ENCODE measurements at regions of chr1 and their contacts with region 1.

Region 1: DNA sequence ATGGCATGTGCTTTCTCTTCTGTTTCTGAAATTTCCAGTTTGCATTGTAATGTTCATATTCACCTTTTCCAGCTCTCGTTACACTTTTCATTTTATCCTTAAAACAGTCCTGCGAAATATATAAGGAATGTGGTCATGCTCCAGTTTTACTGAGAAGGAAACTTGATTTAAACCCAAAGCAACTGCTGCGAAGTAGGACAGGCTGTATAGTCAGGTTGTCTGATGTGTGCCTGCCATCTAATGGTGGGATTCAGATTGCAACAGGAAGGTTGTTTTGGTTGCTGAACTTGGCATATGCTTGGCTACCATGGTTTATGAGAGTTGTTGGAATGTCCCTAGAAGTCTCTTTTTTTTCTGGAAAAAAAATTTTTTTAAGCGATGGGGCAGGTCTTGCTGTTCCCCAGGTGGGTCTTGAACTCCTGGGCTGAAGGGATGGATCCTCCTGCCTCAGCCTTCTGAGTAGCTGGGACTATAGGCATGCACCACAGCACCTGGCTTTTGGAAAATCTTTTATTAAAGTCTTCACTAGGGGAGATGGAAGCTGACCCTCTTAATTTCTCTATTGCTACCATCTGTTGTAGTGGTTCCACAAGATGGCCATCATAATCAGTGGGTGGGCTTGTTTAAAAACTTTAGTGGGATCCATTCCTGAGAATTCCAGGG is 86.9 kb downstream of the UCK2 start:
- DNase-seq: peak; percentile 40 to 71 (median 47)
- H3K4me3 ChIP-seq: no peak overlapping the region
- H3K27ac ChIP-seq: no peak overlapping the region
- H3K4me1 ChIP-seq: peaks cover 12% of the 10 kb centered on the region
- H3K27me3 ChIP-seq: no peaks in the 10 kb centered on the region
- CTCF ChIP-seq: peak; percentile 60 to 77 (median 76)
- EP300 ChIP-seq: no peak
- POLR2A ChIP-seq: no peak

Region 2: DNA sequence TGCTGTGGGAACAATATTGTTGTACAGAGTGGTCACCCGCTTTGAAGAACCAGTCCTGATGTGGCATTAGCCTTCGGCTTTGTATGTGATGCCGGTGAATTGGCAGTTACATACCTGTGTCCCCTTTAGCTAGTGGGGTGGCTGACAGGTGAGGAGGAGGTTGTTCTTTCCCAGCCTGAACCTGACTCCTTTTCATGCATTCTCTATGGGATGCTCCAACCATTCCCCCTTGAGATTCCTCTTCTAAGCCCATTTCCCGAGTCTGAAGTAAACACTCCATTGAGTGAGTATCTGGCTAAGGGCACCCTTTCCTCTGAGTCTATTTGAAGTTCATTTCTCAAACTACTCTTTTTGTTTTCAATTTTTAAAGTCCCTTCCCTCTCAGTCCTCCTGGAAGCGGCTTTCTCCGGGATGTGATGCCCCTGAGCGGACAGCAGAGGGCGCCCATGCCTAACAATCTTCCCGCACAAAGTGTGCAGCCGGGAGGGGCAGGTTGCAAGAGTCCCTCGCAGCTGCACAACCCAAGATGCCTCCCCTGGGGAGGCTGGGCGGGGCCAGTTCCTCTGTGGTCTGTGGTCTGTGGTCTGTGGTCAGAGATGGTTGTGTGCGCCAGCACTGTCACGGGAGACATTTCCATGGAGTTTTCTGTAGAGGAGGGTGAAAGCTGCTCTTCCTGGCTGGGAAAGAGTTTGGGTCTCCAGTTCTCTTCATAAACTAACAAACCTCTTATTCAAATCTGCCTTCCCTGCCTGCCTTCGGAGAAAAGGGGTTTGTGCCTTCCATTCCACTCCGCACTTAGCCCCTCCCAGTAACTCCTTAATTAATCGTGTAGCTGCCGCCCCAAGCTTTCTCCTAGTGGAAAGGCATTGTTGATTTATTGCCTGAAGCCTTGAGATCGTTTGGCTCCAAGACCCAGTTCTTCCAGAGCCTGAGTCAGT is 521.4 kb before region 1 on chr1:
- intact Hi-C with region 1: loop called (anchors 10 kb)
- DNase-seq: peak; percentile 66 to 84 (median 76)
- H3K4me3 ChIP-seq: no peak overlapping the region
- H3K27ac ChIP-seq: no peak overlapping the region
- H3K4me1 ChIP-seq: peaks cover 2% of the 10 kb centered on the region
- H3K27me3 ChIP-seq: no peaks in the 10 kb centered on the region
- CTCF ChIP-seq: peak; percentile 77 to 88 (median 81)
- EP300 ChIP-seq: no peak
- POLR2A ChIP-seq: no peak

Region 3: GRCh38 chr1:165597883-165598675 is 316.2 kb before region 1 on chr1:
- intact Hi-C with region 1: loop called (anchors 2 to 10 kb)
- DNase-seq: peak; percentile 93 to 96 (median 94)
- H3K4me3 ChIP-seq: peak overlapping the region; percentile 48
- H3K27ac ChIP-seq: peak overlapping the region in 1 of 2 donors; percentile 2
- H3K4me1 ChIP-seq: no peaks in the 10 kb centered on the region
- H3K27me3 ChIP-seq: no peaks in the 10 kb centered on the region
- CTCF ChIP-seq: no peak
- EP300 ChIP-seq: no peak
- POLR2A ChIP-seq: no peak

Region 4: GRCh38 chr1:165717918-165718515 is 196.2 kb before region 1 on chr1:
- intact Hi-C with region 1: loop called in 3 of 4 experiments (anchors 10 kb)
- DNase-seq: peak in 1 of 5 donors; percentile 22
- H3K4me3 ChIP-seq: no peak overlapping the region
- H3K27ac ChIP-seq: no peak overlapping the region
- H3K4me1 ChIP-seq: no peaks in the 10 kb centered on the region
- H3K27me3 ChIP-seq: no peaks in the 10 kb centered on the region
- CTCF ChIP-seq: peak in 2 of 3 donors; percentile 31
- EP300 ChIP-seq: no peak
- POLR2A ChIP-seq: no peak

Region 5: DNA sequence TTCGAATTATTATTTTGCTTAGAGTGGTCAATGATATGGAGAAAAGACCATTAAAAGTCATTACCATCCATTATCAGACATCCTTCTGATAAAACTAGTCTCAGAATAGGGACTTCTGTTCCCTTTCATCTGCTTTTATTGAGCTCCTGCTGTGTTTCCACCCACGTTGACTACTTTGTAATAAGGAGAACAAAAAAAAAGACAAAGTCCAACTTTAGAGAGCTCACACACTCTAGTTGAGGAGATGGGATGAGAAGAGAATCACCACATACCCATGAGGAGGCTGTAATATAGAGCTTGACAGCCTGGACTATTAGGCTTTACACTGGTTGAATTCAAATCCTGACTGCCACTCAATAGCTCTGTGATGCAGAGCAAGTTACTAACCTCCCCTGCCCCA is 188.1 kb before region 1 on chr1:
- intact Hi-C with region 1: loop called in 1 of 4 experiments (anchors 10 kb)
- DNase-seq: no peak
- H3K4me3 ChIP-seq: no peak overlapping the region
- H3K27ac ChIP-seq: no peak overlapping the region
- H3K4me1 ChIP-seq: no peaks in the 10 kb centered on the region
- H3K27me3 ChIP-seq: no peaks in the 10 kb centered on the region
- CTCF ChIP-seq: no peak
- EP300 ChIP-seq: no peak
- POLR2A ChIP-seq: no peak

Region 6: GRCh38 chr1:165768513-165769394 is 145.5 kb before region 1 on chr1 and contains the start of gene TMCO1:
- intact Hi-C with region 1: loop called in 1 of 4 experiments (anchors 10 kb)
- DNase-seq: peak; percentile 91 to 94 (median 92)
- H3K4me3 ChIP-seq: peak within 1 kb of the TSS; percentile 60
- H3K27ac ChIP-seq: peak within 1 kb of the TSS; percentile 1 to 78
- H3K4me1 ChIP-seq: peaks cover 7% of the 10 kb centered on the region
- H3K27me3 ChIP-seq: no peaks in the 10 kb centered on the region
- CTCF ChIP-seq: no peak
- EP300 ChIP-seq: no peak
- POLR2A ChIP-seq: peak; percentile 45
- total RNA-seq, gene TMCO1: 38.5 to 77.7 (median 58.5) TPM

Region 7: DNA sequence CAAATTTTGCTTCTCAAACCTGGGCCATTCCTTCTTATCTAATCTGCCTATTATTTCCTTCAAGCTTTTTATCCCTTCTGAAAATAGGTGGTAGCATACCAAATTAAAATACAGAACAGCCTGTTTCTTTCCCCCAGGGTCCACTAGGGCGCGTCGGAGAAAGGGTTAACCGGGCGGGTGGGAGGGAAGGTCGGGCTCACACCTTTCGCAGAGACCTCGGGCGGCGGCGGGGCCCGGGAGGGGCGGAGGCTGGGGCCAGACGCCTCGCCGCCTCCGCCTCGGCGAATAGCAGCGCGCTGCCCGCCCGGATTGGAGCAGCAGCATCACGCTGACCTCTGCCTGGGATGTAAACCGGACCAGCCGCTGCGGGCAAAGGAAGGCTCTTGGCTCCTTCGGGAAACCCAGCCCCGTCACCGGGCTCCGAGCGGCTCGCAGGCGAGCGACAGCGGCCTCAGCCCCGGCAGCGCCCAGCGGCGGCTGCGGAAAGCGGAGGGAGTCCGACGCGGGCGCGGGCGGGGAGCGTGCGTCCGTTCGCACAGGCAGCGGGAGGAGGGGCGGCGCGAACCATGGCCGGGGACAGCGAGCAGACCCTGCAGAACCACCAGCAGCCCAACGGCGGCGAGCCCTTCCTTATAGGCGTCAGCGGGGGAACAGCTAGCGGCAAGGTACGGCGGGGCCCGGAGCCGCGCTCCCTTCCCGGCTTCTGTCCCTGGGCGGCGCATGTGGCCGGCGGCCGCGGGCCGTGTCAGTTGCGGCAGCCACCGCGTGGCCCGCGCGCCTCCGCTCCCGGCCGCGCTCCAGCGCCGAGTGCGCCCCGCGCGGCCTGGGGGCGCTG is 86.8 kb before region 1 on chr1 and contains the start of gene UCK2:
- intact Hi-C with region 1: loop called in 1 of 4 experiments (anchors 5 kb)
- DNase-seq: peak; percentile 60 to 77 (median 71)
- H3K4me3 ChIP-seq: peak within 1 kb of the TSS; percentile 89
- H3K27ac ChIP-seq: peak within 1 kb of the TSS; percentile 82 to 84
- H3K4me1 ChIP-seq: no peaks in the 10 kb centered on the region
- H3K27me3 ChIP-seq: no peaks in the 10 kb centered on the region
- CTCF ChIP-seq: peak in 1 of 3 donors; percentile 28
- EP300 ChIP-seq: no peak
- POLR2A ChIP-seq: no peak
- total RNA-seq, gene UCK2: 13.2 to 22.7 (median 17.1) TPM

Measured in ovary (tissue), 10 donors.